Naive thymus-derived CD4-positive, alpha-beta T cell (primary cell): ENCODE measurements at regions of chr17 and their contacts with region 1.

Region 1: DNA sequence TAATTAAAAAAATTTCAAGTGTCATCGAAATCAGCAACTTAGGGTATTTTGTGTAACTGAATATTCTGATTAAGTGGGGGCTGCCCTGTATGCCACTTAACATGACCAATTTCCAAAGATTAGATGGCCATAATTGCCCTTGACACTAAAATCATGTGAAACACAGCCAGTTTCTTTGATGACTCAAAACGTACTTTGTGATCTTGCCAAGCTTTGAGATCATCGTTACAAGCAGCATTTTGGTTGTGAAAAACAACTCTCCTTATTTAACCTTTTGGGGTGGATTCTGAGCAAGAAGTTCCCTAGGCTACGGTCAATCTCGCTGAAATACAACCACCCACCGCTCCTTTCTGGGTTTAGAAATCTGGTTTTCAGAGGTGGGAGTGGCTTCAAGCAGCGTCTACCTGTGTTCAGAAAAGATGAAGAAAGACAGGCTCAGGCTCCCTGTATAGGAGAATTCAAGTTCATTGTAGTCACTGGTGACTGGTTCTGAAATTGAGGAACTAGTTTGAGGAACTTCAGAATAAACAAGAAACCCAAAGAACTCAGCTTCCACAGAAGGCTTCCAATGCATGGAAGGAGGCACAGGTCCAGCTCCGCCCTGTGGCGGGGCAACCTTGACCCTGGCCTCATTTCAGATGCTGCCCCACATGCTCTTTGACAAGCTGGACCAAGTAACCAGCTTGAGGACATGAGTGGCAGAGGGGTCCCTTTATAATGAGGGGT is 9.4 kb downstream of the MAP3K14 start:
- DNase-seq: peak in 6 of 9 donors; percentile 27 to 57 (median 45)
- ATAC-seq: peak; percentile 75
- H3K4me3 ChIP-seq: peak overlapping the region; percentile 13
- H3K4me3 Mint-ChIP-seq: peak overlapping the region in 8 of 10 donors; percentile 15 to 74 (median 50)
- H3K27ac ChIP-seq: peak overlapping the region; percentile 48
- H3K27ac Mint-ChIP-seq: peak overlapping the region; percentile 71 to 93 (median 83)
- H3K4me1 ChIP-seq: peaks cover 31 to 51% of the 10 kb centered on the region in 2 donors
- H3K4me1 Mint-ChIP-seq: peaks cover 56 to 87% (median 80%) of the 10 kb centered on the region in 7 donors
- H3K27me3 ChIP-seq: no peaks in the 10 kb centered on the region
- H3K27me3 Mint-ChIP-seq: no peaks in the 10 kb centered on the region

Region 2: DNA sequence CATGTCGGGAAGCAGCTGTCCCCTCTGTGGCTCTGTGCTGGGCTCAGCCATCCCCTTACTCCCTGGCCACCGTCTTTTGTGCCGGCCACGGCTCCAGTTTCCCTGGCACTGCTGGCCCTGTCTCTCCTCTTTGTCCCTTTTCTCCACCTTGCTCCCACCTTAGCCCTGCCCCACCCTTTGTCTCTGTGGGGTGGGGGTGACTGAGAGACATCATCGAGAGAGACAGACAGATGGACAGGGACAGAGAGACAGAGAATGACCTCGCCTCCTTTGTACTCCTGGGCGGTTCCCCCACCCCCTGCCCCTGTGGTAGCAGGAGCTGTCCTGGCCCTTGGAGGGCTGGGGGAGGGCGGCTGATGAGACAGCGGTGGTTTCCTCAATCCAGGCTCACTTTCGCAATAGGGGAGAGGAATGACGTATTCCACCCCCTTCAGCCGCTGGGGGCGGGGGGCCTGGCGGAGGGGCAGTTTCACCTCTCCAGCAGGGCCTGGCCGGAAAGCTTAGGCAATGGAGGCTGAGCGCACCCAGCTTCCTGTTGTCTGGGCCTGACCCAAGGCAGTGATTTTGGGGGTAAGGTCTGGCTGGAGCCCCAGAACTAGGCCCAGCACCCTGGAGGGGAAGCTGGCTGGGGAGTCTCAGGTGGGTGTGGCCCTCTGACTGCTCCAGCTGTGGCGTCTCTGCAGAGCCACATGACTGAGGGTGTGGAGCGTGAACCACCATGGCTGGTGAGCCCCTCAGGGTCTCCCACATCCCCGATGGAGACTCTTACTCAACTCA is 78.5 kb before region 1 on chr17:
- CTCF ChIA-PET with region 1: interaction called, 9 read pairs
- POLR2A ChIA-PET with region 1: interaction called, 35 read pairs
- intact Hi-C with region 1: no loop called
- DNase-seq: peak; percentile 64 to 92 (median 74)
- ATAC-seq: peak; percentile 66
- H3K4me3 ChIP-seq: peak overlapping the region; percentile 91
- H3K4me3 Mint-ChIP-seq: peak overlapping the region; percentile 83 to 99 (median 96)
- H3K27ac ChIP-seq: peak overlapping the region; percentile 96
- H3K27ac Mint-ChIP-seq: peak overlapping the region; percentile 96 to 100 (median 99)
- H3K4me1 ChIP-seq: peaks cover 62 to 77% of the 10 kb centered on the region in 2 donors
- H3K4me1 Mint-ChIP-seq: peaks cover 54 to 91% (median 77%) of the 10 kb centered on the region in 7 donors
- H3K27me3 ChIP-seq: no peaks in the 10 kb centered on the region
- H3K27me3 Mint-ChIP-seq: no peaks in the 10 kb centered on the region

Region 3: DNA sequence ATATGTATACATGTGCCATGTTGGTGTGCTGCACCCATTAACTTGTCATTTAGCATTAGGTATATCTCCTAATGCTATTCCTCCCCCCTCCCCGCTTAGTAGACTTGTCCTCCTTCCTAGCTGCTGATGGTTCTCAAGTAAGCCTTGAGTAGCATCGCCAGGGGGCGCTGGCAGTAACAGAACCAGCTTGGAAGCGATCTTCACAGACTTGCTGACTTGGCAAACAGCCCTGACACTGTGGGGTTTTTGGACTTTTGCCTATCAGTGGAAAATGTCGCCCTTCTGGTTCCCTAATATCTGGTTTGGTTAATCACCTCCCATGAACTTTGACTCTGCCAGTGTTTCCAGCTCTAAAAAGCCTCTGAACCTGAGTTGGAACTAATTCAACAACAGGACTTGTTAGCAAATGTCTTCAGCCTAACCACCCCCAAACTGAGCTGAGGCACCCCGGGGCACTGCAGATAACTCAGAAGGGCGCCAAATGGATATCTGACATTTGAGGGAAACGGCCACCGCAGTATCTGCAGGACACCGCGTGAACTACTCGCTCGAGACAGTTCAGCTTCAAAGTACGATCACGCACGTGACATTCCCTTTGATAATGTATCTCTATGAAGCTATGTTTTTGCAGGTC is 30.1 kb before region 1 on chr17:
- CTCF ChIA-PET with region 1: interaction called, 74 read pairs
- POLR2A ChIA-PET with region 1: interaction called, 7 read pairs
- intact Hi-C with region 1: loop called in 1 of 2 experiments (anchors 1 kb)
- DNase-seq: peak; percentile 77 to 89 (median 86)
- ATAC-seq: peak; percentile 98
- H3K4me3 ChIP-seq: no peak overlapping the region
- H3K4me3 Mint-ChIP-seq: peak overlapping the region in 2 of 10 donors; percentile 26 to 28
- H3K27ac ChIP-seq: no peak overlapping the region
- H3K27ac Mint-ChIP-seq: peak overlapping the region; percentile 1 to 77 (median 40)
- H3K4me1 ChIP-seq: peaks cover 0 to 5% of the 10 kb centered on the region in 2 donors
- H3K4me1 Mint-ChIP-seq: peaks cover 3 to 22% (median 10%) of the 10 kb centered on the region in 7 donors
- H3K27me3 ChIP-seq: no peaks in the 10 kb centered on the region
- H3K27me3 Mint-ChIP-seq: no peaks in the 10 kb centered on the region

Region 4: GRCh38 chr17:45385331-45385997 is 78.0 kb after region 1 on chr17:
- CTCF ChIA-PET with region 1: interaction called, 11 read pairs
- POLR2A ChIA-PET with region 1: interaction called, 4 read pairs
- intact Hi-C with region 1: loop called (anchors 1 to 2 kb)
- DNase-seq: peak; percentile 70 to 92 (median 85)
- ATAC-seq: peak; percentile 96
- H3K4me3 ChIP-seq: no peak overlapping the region
- H3K4me3 Mint-ChIP-seq: peak overlapping the region in 1 of 10 donors; percentile 37
- H3K27ac ChIP-seq: no peak overlapping the region
- H3K27ac Mint-ChIP-seq: peak overlapping the region in 3 of 9 donors; percentile 2 to 91 (median 58)
- H3K4me1 ChIP-seq: peaks cover 0 to 10% of the 10 kb centered on the region in 2 donors
- H3K4me1 Mint-ChIP-seq: peaks cover 11 to 23% (median 15%) of the 10 kb centered on the region in 7 donors
- H3K27me3 ChIP-seq: no peaks in the 10 kb centered on the region
- H3K27me3 Mint-ChIP-seq: peaks cover 0 to 14% (median 5%) of the 10 kb centered on the region in 5 donors